A549 (cell line): ENCODE measurements at regions of chr2 and their contacts with region 1.

Region 1: DNA sequence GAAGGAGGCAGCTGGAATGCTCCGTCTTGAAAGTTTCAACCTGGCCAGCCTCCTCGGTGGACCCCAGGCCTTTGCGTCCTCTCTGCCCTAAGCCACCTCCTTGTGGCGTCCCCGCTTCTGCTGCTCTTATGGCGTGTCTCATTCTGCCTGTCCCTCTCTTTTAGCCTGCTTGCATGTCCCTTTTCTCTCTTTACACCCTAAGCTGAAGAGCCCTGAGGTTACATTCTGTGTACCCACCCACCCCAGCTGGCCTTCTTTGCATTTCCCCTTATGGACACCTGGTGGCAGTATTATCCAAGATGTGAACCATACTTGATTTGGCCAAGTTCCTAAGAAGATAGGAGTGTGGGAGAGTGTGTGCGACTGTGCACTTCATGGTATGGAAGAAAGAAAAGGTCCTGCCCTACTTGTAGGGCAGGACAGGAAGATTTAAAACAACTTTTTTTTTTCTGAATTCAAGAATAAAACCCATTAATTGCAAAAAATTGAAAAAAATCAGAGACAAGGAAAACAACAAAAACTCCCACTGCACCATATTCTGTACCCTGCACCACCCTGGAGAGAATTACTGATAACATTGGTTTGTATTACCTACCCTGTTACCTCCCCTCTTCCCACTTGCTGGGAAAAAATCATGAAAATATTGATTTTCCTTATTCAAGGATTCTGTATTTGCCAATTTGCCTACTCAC is 77.4 kb downstream of the DYSF start:
- DNase-seq: peak; percentile 65 to 83
- ATAC-seq: peak; percentile 48 to 87; a peak in 5 of 6 replicates
- H3K4me3 ChIP-seq: no peak overlapping the region
- H3K27ac ChIP-seq: no peak overlapping the region
- H3K4me1 ChIP-seq: no peaks in the 10 kb centered on the region
- CTCF ChIP-seq: peak; percentile 66
- EP300 ChIP-seq: no peak
- POLR2A ChIP-seq: no peak
- RAD21 ChIP-seq: peak; percentile 67 to 84

Region 2: GRCh38 chr2:71471276-71471675 is 59.5 kb before region 1 on chr2:
- CTCF ChIA-PET with region 1: no interaction called
- POLR2A ChIA-PET with region 1: no interaction called
- DNase-seq: no peak
- ATAC-seq: no peak
- H3K4me3 ChIP-seq: no peak overlapping the region
- H3K27ac ChIP-seq: no peak overlapping the region
- H3K4me1 ChIP-seq: no peaks in the 10 kb centered on the region
- CTCF ChIP-seq: no peak
- EP300 ChIP-seq: no peak
- POLR2A ChIP-seq: no peak
- RAD21 ChIP-seq: no peak

Region 3: DNA sequence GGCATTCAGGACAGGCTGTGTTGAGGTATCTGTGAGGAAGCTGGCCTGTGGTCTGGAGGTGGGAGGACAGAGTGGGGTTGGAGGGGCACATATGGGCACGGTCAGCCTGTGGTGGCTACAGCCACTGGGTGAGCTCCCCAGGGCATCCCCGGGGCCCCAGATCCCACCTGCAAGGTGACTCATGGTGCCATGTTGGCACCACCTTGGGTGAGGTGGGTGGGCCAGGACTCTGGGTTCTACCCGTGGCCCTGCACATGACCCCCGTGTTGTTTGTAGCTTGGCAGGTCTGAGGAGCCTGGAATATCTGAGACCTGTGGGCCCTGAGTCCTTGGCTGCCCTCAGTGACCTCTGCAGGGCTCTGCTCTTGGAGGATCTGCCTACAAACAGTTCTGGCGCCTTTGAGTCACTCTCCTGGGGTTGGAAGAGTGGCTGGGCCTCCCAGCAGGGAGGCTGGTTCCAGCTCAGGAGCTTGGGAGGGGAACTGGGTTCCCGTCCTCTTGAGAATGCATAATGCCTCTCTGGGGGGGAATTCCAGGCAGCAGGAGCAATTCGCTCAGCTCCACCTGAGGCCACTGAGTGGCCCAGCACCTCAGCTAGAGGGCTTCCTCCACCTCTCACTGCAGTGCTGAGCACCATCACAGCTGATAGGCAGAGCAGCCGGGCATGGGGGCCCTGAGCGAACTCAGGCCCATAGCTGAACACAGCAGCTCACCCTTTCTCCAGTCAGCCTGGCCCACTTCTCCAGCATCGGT is 27.7 kb after region 1 on chr2:
- CTCF ChIA-PET with region 1: interaction called, 10 read pairs
- POLR2A ChIA-PET with region 1: no interaction called
- DNase-seq: peak; percentile 38 to 50
- ATAC-seq: peak; percentile 46 to 63
- H3K4me3 ChIP-seq: no peak overlapping the region
- H3K27ac ChIP-seq: peak overlapping the region; percentile 40 to 66; a peak in 5 of 6 replicates
- H3K4me1 ChIP-seq: peaks cover 19% of the 10 kb centered on the region
- CTCF ChIP-seq: no peak
- EP300 ChIP-seq: no peak
- POLR2A ChIP-seq: no peak
- RAD21 ChIP-seq: no peak